ENCODE measurements at regions of chr19 and their contacts with region 1.

Region 1: DNA sequence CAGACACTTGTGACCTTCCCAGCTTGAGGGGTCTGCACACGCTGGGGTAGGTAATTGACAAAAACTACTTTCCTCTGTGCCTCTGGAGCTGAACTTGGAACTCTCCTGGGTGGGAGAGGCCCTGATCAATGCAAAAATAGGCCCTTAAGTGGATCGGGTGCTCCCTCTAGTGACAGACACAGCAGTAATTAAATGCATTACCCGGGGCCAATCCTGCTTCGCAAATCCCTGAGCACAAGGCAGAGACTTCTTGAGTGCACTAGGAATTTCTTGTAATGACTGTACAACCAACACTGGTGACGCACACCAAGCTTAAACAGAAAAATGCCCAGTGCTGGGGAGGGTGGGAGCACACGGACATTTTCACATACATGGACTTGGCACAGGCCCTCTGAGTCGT is 10.6 kb upstream of the UBE2S start:
- H3K4me3 ChIP-seq: no peak overlapping the region
- H3K27ac ChIP-seq: no peak overlapping the region
- H3K4me1 ChIP-seq: no peaks in the 10 kb centered on the region
- CTCF ChIP-seq: peak; percentile 61

Region 2: GRCh38 chr19:55146078-55146704 is 272.0 kb before region 1 on chr19:
- CTCF ChIA-PET with region 1: interaction called, 58 read pairs
- POLR2A ChIA-PET with region 1: interaction called, 3 read pairs
- H3K4me3 ChIP-seq: peak overlapping the region; percentile 46
- H3K27ac ChIP-seq: no peak overlapping the region
- H3K4me1 ChIP-seq: no peaks in the 10 kb centered on the region
- CTCF ChIP-seq: peak; percentile 61; the same call in 1 of the 2 replicates

Region 3: DNA sequence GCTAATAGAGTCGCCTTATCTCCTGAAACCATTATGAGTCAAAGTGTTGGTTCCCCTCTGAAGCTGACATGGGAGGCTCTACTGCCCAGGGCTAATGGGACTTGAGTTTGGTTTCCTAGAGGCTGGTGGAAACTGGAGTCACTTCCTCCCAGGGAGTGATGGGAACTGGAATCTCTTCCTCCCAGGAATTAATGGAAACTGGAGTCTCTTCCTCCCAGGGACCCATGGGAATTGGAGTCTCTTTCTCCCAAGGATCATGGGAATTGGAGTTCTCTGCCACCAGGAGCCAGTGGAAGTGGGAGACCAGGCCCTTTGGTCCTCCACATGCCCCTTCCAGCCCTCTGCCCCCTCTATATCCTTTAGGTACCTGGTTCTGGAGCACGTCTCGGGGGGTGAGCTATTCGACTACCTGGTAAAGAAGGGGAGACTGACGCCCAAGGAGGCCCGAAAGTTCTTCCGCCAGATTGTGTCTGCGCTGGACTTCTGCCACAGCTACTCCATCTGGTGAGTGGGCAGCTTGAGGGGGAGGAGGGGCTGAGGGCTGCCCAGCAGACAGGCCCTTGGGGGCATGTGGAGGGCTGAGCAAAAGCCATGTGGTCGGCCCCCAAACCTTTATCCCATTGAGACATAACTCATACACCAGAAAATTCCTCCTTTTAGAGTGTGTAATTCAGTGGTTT is 128.9 kb before region 1 on chr19:
- CTCF ChIA-PET with region 1: interaction called, 24 read pairs
- POLR2A ChIA-PET with region 1: interaction called, 3 read pairs
- H3K4me3 ChIP-seq: no peak overlapping the region
- H3K27ac ChIP-seq: no peak overlapping the region
- H3K4me1 ChIP-seq: no peaks in the 10 kb centered on the region
- CTCF ChIP-seq: no peak

Region 4: GRCh38 chr19:55362990-55363716 is 55.0 kb before region 1 on chr19 and contains the start of gene GARIN5B:
- CTCF ChIA-PET with region 1: no interaction called
- POLR2A ChIA-PET with region 1: no interaction called
- H3K4me3 ChIP-seq: no peak within 1 kb of the TSS
- H3K27ac ChIP-seq: no peak within 1 kb of the TSS
- H3K4me1 ChIP-seq: no peaks in the 10 kb centered on the region
- CTCF ChIP-seq: no peak

Region 5: GRCh38 chr19:55443060-55443823 is 25.1 kb after region 1 on chr19 and contains the start of gene SHISA7:
- CTCF ChIA-PET with region 1: interaction called, 10 read pairs
- POLR2A ChIA-PET with region 1: no interaction called
- H3K4me3 ChIP-seq: 0 out of 2 replicates have a peak within 1 kb of the TSS, but pooled peaks have one; percentile 3
- H3K27ac ChIP-seq: no peak within 1 kb of the TSS
- H3K4me1 ChIP-seq: 0 out of 2 replicates have a peak, but pooled peaks cover 3% of the 10 kb centered on the region
- CTCF ChIP-seq: 0 out of 2 replicates have a peak, but pooled peaks have one; percentile 10

Region 6: DNA sequence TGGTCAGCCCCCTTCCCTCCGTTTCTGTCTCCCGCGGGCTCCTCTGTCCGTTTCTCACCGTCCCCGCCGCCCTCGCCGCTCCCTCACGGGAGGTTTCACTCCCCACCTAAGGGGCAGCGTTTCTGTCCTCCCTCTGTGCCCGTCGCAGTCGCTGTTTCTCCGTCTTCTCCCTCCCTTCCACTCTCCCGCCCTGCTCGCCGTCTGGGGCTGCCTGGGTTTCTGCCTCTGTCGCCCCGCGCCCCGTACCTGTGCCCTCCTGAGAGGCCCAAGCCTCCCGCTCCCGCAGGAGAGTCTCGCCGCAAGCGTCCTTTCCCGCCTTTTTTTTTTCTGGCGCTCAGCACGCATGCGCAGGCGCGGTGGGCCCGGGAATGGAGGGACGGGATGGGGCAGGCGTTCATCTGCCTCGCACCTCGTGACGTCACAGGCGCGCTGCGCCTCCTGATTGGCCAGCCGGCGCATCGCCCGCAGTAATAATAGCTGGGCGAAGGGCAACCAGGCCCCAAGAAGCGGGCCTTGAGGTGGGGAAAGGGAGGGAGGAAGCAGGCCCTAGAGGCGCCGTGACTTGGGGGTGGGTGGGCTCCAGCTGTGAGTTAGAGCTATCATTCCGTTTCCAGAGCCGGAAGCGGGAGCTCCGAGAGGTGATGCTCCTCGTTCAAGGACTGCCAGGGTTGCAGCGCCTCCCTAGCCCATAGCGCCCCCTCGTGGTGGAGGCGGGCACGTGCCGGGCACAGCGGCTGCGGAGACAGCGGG is 85.5 kb after region 1 on chr19:
- CTCF ChIA-PET with region 1: interaction called, 12 read pairs
- POLR2A ChIA-PET with region 1: no interaction called
- H3K4me3 ChIP-seq: peak overlapping the region; percentile 50
- H3K27ac ChIP-seq: peak overlapping the region; percentile 33; the same call in 1 of the 2 replicates
- H3K4me1 ChIP-seq: no peaks in the 10 kb centered on the region
- CTCF ChIP-seq: peak; percentile 97